ENCODE measurements at regions of chr16 and their contacts with region 1.

Region 1: GRCh38 chr16:14013571-14014282 is 57.4 kb upstream of the MRTFB start:
- DNase-seq: no peak
- H3K4me3 ChIP-seq: no peak overlapping the region
- H3K27ac ChIP-seq: peak overlapping the region in 1 of 2 donors; percentile 30
- H3K4me1 ChIP-seq: peaks cover 6% of the 10 kb centered on the region
- H3K27me3 ChIP-seq: no peaks in the 10 kb centered on the region
- CTCF ChIP-seq: no peak
- POLR2A ChIP-seq: no peak

Region 2: DNA sequence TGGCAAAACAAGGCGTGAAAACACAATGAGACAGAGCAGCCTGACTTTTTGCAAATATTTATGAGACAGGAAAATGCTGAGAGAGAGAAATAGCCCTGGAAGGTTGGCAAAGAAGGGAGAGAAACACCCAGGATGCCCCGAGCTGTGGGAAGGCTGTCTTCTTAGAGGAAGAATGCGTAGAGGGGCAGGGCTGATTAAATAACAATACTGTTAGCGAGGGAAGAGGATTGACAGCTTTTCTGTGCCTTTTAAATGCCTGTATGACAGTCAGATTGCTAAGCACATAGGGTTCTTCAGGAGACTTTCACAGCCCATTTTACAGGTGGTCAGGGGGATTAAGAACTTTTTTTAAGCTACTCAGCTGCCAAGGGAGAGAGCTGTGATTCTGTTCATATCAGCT is 893.2 kb before region 1 on chr16:
- intact Hi-C with region 1: no loop called
- DNase-seq: no peak
- H3K4me3 ChIP-seq: no peak overlapping the region
- H3K27ac ChIP-seq: no peak overlapping the region
- H3K4me1 ChIP-seq: no peaks in the 10 kb centered on the region
- H3K27me3 ChIP-seq: no peaks in the 10 kb centered on the region
- CTCF ChIP-seq: no peak
- POLR2A ChIP-seq: no peak

Region 3: DNA sequence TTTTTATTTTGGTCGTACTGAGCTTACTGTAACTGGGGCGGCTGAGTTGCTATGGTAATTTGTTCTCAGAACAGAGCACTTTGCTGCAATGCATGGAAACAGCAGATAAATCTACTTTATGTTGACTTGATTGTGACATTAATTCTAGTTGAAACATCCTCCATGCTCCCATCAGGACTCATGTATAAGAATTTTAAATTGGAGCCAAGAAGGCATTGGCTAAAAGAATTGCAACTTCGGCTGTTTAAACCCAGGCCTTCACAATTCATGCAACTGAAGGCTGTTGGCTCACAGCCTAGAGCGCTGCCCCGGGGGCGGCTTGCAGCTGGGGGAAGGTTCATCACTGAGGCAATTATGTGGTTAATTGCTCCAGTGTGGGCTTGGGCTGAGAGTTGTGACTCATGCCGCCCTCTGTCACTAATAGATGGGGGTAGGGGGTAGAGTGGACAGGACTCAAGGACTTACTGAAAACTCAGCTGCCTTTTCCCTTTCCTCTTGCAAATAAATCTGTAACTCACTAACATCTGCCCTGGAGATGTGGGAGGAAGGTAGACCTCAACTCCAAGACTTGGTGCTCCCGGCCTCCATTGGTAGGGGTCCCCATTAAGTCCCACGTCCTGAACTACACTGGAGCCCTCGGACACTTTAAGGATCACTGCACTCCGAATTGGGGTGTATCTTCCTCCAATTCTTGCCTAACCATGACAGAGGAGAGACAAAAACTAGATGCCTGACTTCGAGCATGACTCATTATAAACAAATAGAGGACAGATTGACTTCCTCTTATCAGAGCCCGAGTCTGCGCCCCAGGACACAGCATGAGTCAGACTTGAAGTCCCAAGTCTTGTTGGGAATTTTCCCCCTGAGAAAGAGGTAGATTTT is 56.3 kb before region 1 on chr16:
- intact Hi-C with region 1: loop called (anchors 10 kb)
- DNase-seq: peak; percentile 73
- H3K4me3 ChIP-seq: no peak overlapping the region
- H3K27ac ChIP-seq: peak overlapping the region; percentile 33 to 50
- H3K4me1 ChIP-seq: no peaks in the 10 kb centered on the region
- H3K27me3 ChIP-seq: no peaks in the 10 kb centered on the region
- CTCF ChIP-seq: no peak
- POLR2A ChIP-seq: no peak

Region 4: GRCh38 chr16:14121142-14121541 is 107.4 kb after region 1 on chr16:
- intact Hi-C with region 1: no loop called
- DNase-seq: no peak
- H3K4me3 ChIP-seq: no peak overlapping the region
- H3K27ac ChIP-seq: no peak overlapping the region
- H3K4me1 ChIP-seq: no peaks in the 10 kb centered on the region
- H3K27me3 ChIP-seq: no peaks in the 10 kb centered on the region
- CTCF ChIP-seq: no peak
- POLR2A ChIP-seq: no peak

Measured in prostate gland (tissue), 2 donors.